Activated T-helper 1 cell treated with anti-CD3 and anti-CD28 coated beads, Interleukin-12 subunit alpha, Interleukin-12 subunit beta, Interleukin-2, Interleukin-4 antibody, amounts not matched to agents 30 ng/mL and 10 ng/mL and 1 ng/mL, durations not matched to agents 14 hours and 24 hours and 36 hours (primary cell): ENCODE measurements at regions of chr7 and their contacts with region 1.

Region 1: DNA sequence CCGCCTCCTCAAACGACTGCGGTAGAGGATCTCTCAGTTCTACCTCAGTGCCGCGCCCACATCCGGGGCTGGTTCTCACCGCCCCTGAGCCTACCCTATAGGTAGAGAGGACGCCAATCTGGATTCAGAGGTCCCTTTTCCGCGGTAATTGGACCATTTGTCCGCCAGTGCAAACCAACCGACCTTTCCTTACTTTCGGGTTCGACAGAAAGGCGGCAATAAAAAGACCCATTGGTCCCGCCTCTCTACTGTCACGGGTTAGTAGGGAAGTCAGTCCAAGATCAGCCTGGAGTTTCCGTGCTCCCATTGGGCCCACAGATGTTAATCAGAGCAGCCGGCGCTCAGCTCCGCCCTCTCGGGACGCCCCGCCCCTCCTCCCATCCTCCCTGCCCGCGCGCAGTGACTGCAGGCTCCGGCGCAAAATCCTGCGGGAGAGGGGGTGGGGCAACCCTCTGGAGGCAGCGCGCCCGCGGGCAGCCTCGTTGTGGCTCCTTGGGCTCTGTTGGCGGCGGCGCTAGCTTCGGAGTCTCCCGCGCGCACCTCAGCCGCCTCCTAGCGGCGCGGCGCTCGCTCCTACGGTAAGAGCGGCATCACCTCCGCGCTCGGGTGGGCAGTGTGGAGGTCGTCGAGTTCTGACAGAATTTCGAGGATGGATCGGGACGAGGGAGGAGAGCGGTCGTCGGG is at the starts of genes PHTF2 and TMEM60:
- DNase-seq: peak; percentile 90
- H3K4me3 Mint-ChIP-seq: peak within 1 kb of the TSS; percentile 95
- H3K27ac Mint-ChIP-seq: peak within 1 kb of the TSS; percentile 92
- H3K4me1 Mint-ChIP-seq: peaks cover 59% of the 10 kb centered on the region
- H3K27me3 Mint-ChIP-seq: no peaks in the 10 kb centered on the region
- total RNA-seq, gene PHTF2: 30.9 and 31.2 TPM in 2 replicates
- total RNA-seq, gene TMEM60: 9.0 and 11.0 TPM in 2 replicates

Region 2: DNA sequence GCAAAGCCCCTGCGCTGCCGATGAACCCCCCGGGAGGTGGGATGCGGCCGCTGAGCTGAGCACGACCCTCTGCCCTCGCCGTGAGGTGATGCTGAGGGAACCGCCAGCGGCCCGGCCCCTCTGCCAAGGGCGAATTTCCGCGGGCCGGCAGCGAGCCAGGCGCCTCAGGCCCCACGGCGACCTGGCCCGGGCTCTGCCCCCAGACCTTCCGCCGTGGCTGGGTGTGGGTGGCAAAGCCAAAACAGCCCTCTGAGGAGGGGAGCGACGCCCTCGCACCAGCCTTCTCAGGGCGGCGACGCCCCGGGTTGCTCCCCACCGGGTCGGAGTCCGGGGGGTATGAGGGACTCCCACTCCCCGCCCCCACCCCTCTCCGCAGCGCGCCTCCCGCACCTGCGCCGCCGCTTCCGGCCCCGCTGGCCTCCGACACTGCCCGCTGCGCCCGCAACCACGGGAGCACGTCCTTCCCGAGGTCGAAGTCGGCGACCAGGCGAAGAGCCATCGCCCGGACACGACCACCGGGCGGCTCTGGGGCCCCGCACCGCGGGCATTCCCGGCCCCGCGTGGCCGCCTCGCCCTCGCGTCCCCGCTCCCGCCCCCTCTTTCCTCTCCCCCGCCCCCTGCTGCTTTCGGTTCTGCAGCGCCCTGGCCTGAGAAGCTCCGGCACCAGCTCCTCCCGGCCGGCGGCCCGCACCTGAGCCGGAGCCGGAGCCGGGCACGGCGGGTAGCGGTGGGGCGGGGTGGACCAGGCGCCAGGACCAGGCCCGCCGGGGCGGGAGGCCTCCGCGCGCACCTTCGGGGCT is 382.5 kb before region 1 on chr7 and contains the start of gene GSAP:
- intact Hi-C with region 1: loop called (anchors 10 kb)
- DNase-seq: peak; percentile 38
- H3K4me3 Mint-ChIP-seq: peak within 1 kb of the TSS; percentile 50
- H3K27ac Mint-ChIP-seq: peak within 1 kb of the TSS; percentile 58
- H3K4me1 Mint-ChIP-seq: peaks cover 20% of the 10 kb centered on the region
- H3K27me3 Mint-ChIP-seq: peaks cover 30% of the 10 kb centered on the region
- total RNA-seq, gene GSAP: 1.3 and 1.6 TPM in 2 replicates

Region 3: GRCh38 chr7:77696198-77697028 is 102.1 kb before region 1 on chr7 and contains the start of gene RSBN1L:
- intact Hi-C with region 1: loop called (anchors 1 kb)
- DNase-seq: peak; percentile 98
- H3K4me3 Mint-ChIP-seq: peak within 1 kb of the TSS; percentile 99
- H3K27ac Mint-ChIP-seq: peak within 1 kb of the TSS; percentile 94
- H3K4me1 Mint-ChIP-seq: peaks cover 55% of the 10 kb centered on the region
- H3K27me3 Mint-ChIP-seq: no peaks in the 10 kb centered on the region
- total RNA-seq, gene RSBN1L: 27.9 and 30.6 TPM in 2 replicates

Region 4: DNA sequence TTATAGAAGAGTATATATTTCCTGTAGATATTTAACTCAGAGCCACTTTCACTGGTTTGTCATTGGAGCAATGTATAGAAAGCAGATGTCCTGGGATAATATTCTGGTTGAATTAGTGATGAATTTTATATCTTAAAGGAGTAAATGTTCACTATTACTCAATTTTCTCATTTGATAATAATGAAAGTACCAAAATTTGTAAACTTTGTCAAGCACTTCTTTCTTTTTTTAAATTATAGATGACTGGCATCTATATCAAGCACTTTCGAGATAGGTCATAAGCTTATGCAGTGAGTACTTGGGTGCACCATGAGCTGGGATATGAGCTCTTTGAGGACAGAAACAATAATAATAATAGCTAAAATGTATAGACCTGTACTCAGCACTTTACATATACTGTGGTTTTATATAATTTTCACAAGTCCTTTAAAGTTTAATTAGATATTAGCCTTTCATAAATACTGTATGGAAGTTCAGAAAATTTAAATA is 91.0 kb before region 1 on chr7:
- intact Hi-C with region 1: no loop called
- DNase-seq: no peak
- H3K4me3 Mint-ChIP-seq: no peak overlapping the region
- H3K27ac Mint-ChIP-seq: no peak overlapping the region
- H3K4me1 Mint-ChIP-seq: peaks cover 32% of the 10 kb centered on the region
- H3K27me3 Mint-ChIP-seq: no peaks in the 10 kb centered on the region

Region 5: GRCh38 chr7:77894574-77895091 is 96.1 kb after region 1 on chr7:
- intact Hi-C with region 1: loop called (anchors 5 kb)
- DNase-seq: no peak
- H3K4me3 Mint-ChIP-seq: no peak overlapping the region
- H3K27ac Mint-ChIP-seq: no peak overlapping the region
- H3K4me1 Mint-ChIP-seq: no peaks in the 10 kb centered on the region
- H3K27me3 Mint-ChIP-seq: no peaks in the 10 kb centered on the region

Region 6: DNA sequence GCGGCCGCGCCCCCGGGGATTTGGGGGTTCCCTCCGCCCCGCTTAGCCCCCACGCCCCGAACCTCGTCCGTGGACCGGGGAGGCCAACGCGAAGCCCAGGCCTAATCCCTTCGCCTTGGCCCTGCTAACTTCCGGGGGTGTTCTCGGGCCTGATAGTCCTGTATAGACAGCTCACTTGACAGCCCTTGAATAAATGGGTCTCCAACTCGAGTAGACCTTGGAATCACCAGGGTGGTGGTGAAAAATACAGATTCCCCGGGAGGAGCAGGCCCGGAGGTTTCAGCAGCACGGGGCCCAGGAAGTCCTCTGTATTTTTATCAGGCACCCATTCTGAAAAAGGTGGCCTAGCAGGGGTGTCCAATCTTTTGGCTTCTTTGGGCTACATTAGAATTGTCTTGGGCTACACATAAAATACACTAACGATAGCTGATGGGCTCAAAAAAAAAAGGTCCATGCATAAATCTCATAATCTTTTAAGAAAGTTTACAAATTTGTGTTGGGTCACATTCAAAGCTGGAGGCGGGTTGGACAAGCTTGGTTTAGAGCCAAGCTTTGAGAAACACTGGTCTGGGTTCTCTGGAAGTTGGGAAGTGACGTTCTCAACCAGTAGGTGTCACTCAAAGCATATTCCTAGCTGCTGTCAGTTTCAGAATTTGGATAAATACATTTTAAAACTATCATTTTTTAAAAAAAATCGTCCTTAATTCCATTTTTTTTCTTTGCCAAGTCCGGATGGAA is 221.8 kb after region 1 on chr7:
- intact Hi-C with region 1: loop called (anchors 2 kb)
- DNase-seq: peak; percentile 10
- H3K4me3 Mint-ChIP-seq: peak overlapping the region; percentile 78
- H3K27ac Mint-ChIP-seq: peak overlapping the region; percentile 25
- H3K4me1 Mint-ChIP-seq: peaks cover 14% of the 10 kb centered on the region
- H3K27me3 Mint-ChIP-seq: peaks cover 39% of the 10 kb centered on the region

Region 7: DNA sequence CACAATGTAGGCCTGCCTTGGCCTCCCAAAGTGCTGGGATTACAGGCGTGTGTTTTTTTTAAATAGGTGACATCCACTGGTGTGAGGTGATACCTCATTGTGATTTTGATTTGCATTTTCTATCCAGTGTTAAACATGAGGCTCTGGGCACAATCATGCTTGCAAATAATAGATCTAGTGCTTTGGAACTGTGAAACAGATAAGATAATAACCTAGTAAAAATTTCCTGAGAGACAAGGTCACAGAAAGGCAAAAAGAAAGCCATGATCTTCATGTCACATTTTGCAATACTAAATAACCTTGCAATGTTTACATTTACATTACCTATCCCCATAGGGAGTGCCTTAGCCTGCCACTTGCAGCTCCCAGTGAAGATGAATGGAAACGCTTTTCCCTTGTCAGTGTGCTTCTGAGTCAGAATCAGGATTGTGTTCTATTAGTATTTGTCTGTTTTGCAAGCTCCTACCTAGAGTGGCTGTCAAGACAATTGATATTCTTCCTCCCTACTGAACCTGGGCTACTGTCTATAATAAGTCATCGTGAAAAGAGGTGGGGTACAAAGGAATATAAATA is 256.6 kb after region 1 on chr7:
- intact Hi-C with region 1: no loop called
- DNase-seq: no peak
- H3K4me3 Mint-ChIP-seq: no peak overlapping the region
- H3K27ac Mint-ChIP-seq: no peak overlapping the region
- H3K4me1 Mint-ChIP-seq: no peaks in the 10 kb centered on the region
- H3K27me3 Mint-ChIP-seq: peaks cover 7% of the 10 kb centered on the region

Region 8: DNA sequence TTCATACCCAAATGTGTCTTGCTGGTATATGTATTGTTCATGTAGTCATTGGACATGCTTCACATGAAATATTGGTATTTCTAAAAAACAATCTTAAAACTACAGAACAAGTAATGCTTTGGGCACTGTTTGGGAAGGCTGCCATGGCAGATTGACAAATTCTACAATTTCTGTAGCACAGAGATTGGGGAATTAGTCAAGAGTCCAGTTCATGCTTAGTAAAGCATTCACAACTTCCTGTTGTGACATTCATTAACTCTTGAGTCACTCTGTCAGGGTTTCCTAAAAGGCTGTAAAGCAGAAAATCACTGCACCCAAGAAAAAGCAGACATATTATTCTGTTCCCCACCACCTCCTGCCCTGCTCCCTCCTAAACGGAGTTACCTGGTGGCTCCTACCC is 398.9 kb after region 1 on chr7:
- intact Hi-C with region 1: no loop called
- DNase-seq: no peak
- H3K4me3 Mint-ChIP-seq: no peak overlapping the region
- H3K27ac Mint-ChIP-seq: no peak overlapping the region
- H3K4me1 Mint-ChIP-seq: no peaks in the 10 kb centered on the region
- H3K27me3 Mint-ChIP-seq: no peaks in the 10 kb centered on the region